CD8-positive, alpha-beta memory T cell (primary cell): ENCODE measurements at regions of chr11 and their contacts with region 1.

Region 1: DNA sequence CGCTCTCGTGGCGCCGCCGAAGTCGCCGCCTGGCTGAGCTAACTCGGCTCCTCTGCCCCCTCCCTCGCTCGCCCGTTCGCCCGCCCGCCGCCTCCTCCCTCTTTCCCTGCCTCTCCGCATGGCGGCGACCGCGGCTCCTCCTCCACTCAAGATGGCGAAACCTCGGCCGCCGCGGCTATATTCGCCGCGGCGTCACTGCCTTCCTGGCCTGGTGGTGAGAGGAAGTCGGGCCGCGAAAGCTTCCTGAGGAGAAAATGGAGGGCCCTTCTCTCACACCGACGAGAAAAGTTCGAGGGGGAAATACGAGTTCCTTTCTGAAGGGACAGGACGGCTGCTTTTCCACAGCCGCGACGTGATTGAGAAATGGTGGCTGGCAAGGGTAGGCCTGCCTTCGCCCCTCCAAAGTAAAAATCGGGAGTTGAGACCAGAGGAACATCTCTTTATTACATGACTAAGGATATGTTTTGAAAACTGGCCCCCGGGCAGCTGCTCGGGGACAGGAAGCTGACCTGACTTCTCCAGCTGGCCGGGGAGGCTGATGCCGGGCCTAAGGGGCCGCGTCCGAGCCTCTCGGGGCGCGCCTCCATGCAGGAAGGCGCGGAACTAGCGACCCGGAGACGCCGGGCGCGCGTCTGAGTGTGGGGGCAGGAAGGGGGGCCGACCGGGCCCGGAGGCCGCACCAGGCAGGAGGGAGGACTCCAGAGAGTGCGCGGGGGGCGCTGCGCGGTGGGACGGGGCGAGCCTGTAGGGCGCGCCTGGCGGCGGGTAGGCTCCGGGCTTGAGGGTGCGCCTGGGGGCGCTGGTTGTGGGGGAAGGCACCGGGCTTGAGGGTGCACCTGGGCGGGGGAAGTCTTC is at the start of gene DDX6:
- DNase-seq: peak; percentile 84 to 94 (median 87)
- H3K4me3 ChIP-seq: peak within 1 kb of the TSS; percentile 68
- H3K4me3 Mint-ChIP-seq: peak within 1 kb of the TSS; percentile 94 to 100 (median 100)
- H3K27ac ChIP-seq: peak within 1 kb of the TSS; percentile 94
- H3K27ac Mint-ChIP-seq: peak within 1 kb of the TSS; percentile 99 to 100 (median 99)
- H3K4me1 ChIP-seq: peaks cover 27% of the 10 kb centered on the region
- H3K4me1 Mint-ChIP-seq: peaks cover 23 to 34% (median 31%) of the 10 kb centered on the region in 3 donors
- H3K27me3 ChIP-seq: no peaks in the 10 kb centered on the region
- H3K27me3 Mint-ChIP-seq: no peaks in the 10 kb centered on the region
- total RNA-seq, gene DDX6: 187 to 189 TPM

Region 2: DNA sequence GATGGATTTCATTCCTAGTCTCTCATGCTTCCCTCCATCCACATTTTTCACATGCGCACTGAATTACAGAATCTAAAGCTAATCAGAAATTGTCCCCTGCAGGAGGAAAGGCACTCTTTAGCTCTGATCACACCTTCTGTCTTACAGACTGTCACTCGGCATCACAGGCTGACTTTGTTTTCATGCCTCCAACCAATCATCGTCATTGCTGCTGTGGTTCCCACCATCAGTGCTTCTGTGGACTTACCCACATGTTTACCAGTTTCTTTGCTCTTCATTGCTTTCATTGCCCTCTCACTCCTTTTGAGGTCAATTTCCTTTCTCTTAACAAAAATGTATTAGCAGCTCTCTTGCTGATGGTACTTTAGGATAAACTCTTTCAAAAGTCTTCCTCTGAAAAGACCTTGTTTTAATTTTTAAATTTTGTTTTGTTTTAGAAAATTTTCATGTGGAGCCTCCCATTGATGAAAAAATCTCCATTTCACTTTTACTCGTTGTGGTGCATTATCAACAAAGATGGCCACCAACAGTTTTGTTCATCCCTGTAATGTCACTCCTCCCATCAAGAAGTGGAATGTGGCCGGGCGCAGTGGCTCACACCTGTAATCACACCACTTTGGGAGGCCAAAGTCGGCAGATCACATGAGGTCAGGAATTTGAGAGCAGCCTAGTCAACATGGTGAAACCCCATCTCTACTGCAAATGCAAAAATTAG is 91.7 kb before region 1 on chr11:
- CTCF ChIA-PET with region 1: interaction called, 28 read pairs
- POLR2A ChIA-PET with region 1: interaction called, 14 read pairs
- DNase-seq: peak; percentile 57 to 91 (median 88)
- H3K4me3 ChIP-seq: no peak overlapping the region
- H3K4me3 Mint-ChIP-seq: peak overlapping the region; percentile 8 to 78 (median 69)
- H3K27ac ChIP-seq: peak overlapping the region; percentile 44
- H3K27ac Mint-ChIP-seq: peak overlapping the region; percentile 85 to 99 (median 98)
- H3K4me1 ChIP-seq: peaks cover 73% of the 10 kb centered on the region
- H3K4me1 Mint-ChIP-seq: peaks cover 47 to 76% (median 66%) of the 10 kb centered on the region in 3 donors
- H3K27me3 ChIP-seq: no peaks in the 10 kb centered on the region
- H3K27me3 Mint-ChIP-seq: no peaks in the 10 kb centered on the region

Region 3: DNA sequence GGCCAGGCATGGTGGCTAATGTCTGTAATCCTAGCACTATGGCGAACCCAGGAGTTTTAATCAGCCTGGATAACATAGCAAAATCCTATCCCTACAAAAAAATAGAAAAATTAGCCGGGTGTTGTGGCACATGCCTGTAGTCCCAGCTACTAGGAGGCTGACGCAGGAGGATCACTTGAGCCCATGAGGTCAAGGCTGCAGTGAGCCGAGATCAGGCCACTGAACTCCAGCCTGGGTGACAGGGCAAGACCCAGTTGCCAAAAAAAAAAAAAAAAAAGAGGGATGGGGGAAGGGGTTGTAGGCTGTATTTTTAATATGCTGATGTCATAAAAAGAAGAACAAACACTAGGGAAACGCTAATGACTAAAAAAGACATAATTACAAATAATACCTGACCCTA is 12.4 kb before region 1 on chr11:
- CTCF ChIA-PET with region 1: no interaction called
- POLR2A ChIA-PET with region 1: interaction called, 11 read pairs
- DNase-seq: no peak
- H3K4me3 ChIP-seq: no peak overlapping the region
- H3K4me3 Mint-ChIP-seq: no peak overlapping the region
- H3K27ac ChIP-seq: no peak overlapping the region
- H3K27ac Mint-ChIP-seq: peak overlapping the region in 1 of 8 donors; percentile 50
- H3K4me1 ChIP-seq: peaks cover 75% of the 10 kb centered on the region
- H3K4me1 Mint-ChIP-seq: peaks cover 59 to 94% (median 84%) of the 10 kb centered on the region in 3 donors
- H3K27me3 ChIP-seq: no peaks in the 10 kb centered on the region
- H3K27me3 Mint-ChIP-seq: no peaks in the 10 kb centered on the region

Region 4: GRCh38 chr11:118878163-118878563 is 86.8 kb after region 1 on chr11:
- CTCF ChIA-PET with region 1: interaction called, 17 read pairs
- POLR2A ChIA-PET with region 1: interaction called, 68 read pairs
- DNase-seq: peak in 1 of 5 donors; percentile 58
- H3K4me3 ChIP-seq: peak overlapping the region; percentile 11
- H3K4me3 Mint-ChIP-seq: peak overlapping the region in 3 of 7 donors; percentile 2 to 25 (median 24)
- H3K27ac ChIP-seq: no peak overlapping the region
- H3K27ac Mint-ChIP-seq: peak overlapping the region; percentile 77 to 99 (median 98)
- H3K4me1 ChIP-seq: peaks cover 89% of the 10 kb centered on the region
- H3K4me1 Mint-ChIP-seq: peaks cover 76 to 92% (median 90%) of the 10 kb centered on the region in 3 donors
- H3K27me3 ChIP-seq: no peaks in the 10 kb centered on the region
- H3K27me3 Mint-ChIP-seq: no peaks in the 10 kb centered on the region

Region 5: GRCh38 chr11:118907051-118908042 is 116.0 kb after region 1 on chr11:
- CTCF ChIA-PET with region 1: interaction called, 40 read pairs
- POLR2A ChIA-PET with region 1: interaction called, 63 read pairs
- DNase-seq: peak; percentile 74 to 88 (median 82)
- H3K4me3 ChIP-seq: no peak overlapping the region
- H3K4me3 Mint-ChIP-seq: peak overlapping the region in 5 of 7 donors; percentile 21 to 65 (median 34)
- H3K27ac ChIP-seq: no peak overlapping the region
- H3K27ac Mint-ChIP-seq: peak overlapping the region; percentile 81 to 100 (median 96)
- H3K4me1 ChIP-seq: peaks cover 57% of the 10 kb centered on the region
- H3K4me1 Mint-ChIP-seq: peaks cover 42 to 57% (median 47%) of the 10 kb centered on the region in 3 donors
- H3K27me3 ChIP-seq: no peaks in the 10 kb centered on the region
- H3K27me3 Mint-ChIP-seq: no peaks in the 10 kb centered on the region

Region 6: DNA sequence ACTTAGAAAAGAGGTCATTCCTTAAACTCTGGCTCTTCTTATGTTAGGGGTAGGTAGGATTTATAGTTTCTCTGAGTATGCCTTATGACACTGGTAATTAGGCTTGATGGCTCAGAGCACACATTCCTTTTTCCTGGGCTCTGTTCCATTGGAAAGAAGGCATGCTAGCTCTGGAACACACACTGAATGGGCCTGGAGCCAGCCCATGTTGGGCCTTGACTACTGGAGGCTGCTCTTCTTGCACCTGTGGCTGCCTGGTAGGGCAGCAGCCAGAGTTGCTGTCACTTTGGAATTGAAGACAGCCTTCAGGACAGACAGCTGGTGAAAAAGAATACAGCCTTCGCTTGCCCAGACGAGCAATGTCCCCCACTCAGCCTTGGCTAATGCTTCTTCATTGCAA is 507.4 kb after region 1 on chr11:
- CTCF ChIA-PET with region 1: no interaction called
- POLR2A ChIA-PET with region 1: no interaction called
- DNase-seq: no peak
- H3K4me3 ChIP-seq: no peak overlapping the region
- H3K4me3 Mint-ChIP-seq: no peak overlapping the region
- H3K27ac ChIP-seq: no peak overlapping the region
- H3K27ac Mint-ChIP-seq: peak overlapping the region in 1 of 8 donors; percentile 46
- H3K4me1 ChIP-seq: no peaks in the 10 kb centered on the region
- H3K4me1 Mint-ChIP-seq: no peaks in the 10 kb centered on the region
- H3K27me3 ChIP-seq: no peaks in the 10 kb centered on the region
- H3K27me3 Mint-ChIP-seq: no peaks in the 10 kb centered on the region